Ovary (tissue), 10 donors: ENCODE measurements at regions of chr7 and their contacts with region 1.

Region 1: GRCh38 chr7:128946923-128947830 is 9.4 kb downstream of the IRF5 start:
- DNase-seq: no peak
- H3K4me3 ChIP-seq: no peak overlapping the region
- H3K27ac ChIP-seq: no peak overlapping the region
- H3K4me1 ChIP-seq: no peaks in the 10 kb centered on the region
- H3K27me3 ChIP-seq: no peaks in the 10 kb centered on the region
- CTCF ChIP-seq: no peak
- EP300 ChIP-seq: no peak
- POLR2A ChIP-seq: no peak

Region 2: GRCh38 chr7:129502376-129502776 is 555.2 kb after region 1 on chr7 and contains the start of gene SMKR1:
- intact Hi-C with region 1: loop called in 1 of 4 experiments (anchors 5 kb)
- DNase-seq: peak; percentile 51 to 83 (median 71)
- H3K4me3 ChIP-seq: peak within 1 kb of the TSS; percentile 35
- H3K27ac ChIP-seq: no peak within 1 kb of the TSS
- H3K4me1 ChIP-seq: peaks cover 1% of the 10 kb centered on the region
- H3K27me3 ChIP-seq: no peaks in the 10 kb centered on the region
- CTCF ChIP-seq: no peak
- EP300 ChIP-seq: no peak
- POLR2A ChIP-seq: no peak
- total RNA-seq, gene SMKR1: 0.48 to 3.2 (median 1.2) TPM in 5 of 7 donors, not detected in the others